ENCODE measurements at regions of chr2 and their contacts with region 1.

Region 1: GRCh38 chr2:178136321-178137025 is 24.2 kb downstream of the RBM45 start:
- DNase-seq: no peak
- H3K4me3 ChIP-seq: no peak overlapping the region
- H3K27ac ChIP-seq: no peak overlapping the region
- H3K4me1 ChIP-seq: no peaks in the 10 kb centered on the region
- H3K27me3 ChIP-seq: peaks cover 4% of the 10 kb centered on the region
- CTCF ChIP-seq: no peak

Region 2: GRCh38 chr2:178177066-178177679 is 40.7 kb after region 1 on chr2:
- intact Hi-C with region 1: no loop called
- DNase-seq: no peak
- H3K4me3 ChIP-seq: no peak overlapping the region
- H3K27ac ChIP-seq: no peak overlapping the region
- H3K4me1 ChIP-seq: no peaks in the 10 kb centered on the region
- H3K27me3 ChIP-seq: no peaks in the 10 kb centered on the region
- CTCF ChIP-seq: no peak

Region 3: GRCh38 chr2:178208817-178209216 is 72.3 kb after region 1 on chr2:
- intact Hi-C with region 1: loop called (anchors 10 kb)
- DNase-seq: no peak
- H3K4me3 ChIP-seq: no peak overlapping the region
- H3K27ac ChIP-seq: no peak overlapping the region
- H3K4me1 ChIP-seq: no peaks in the 10 kb centered on the region
- H3K27me3 ChIP-seq: no peaks in the 10 kb centered on the region
- CTCF ChIP-seq: peak; percentile 16

Region 4: DNA sequence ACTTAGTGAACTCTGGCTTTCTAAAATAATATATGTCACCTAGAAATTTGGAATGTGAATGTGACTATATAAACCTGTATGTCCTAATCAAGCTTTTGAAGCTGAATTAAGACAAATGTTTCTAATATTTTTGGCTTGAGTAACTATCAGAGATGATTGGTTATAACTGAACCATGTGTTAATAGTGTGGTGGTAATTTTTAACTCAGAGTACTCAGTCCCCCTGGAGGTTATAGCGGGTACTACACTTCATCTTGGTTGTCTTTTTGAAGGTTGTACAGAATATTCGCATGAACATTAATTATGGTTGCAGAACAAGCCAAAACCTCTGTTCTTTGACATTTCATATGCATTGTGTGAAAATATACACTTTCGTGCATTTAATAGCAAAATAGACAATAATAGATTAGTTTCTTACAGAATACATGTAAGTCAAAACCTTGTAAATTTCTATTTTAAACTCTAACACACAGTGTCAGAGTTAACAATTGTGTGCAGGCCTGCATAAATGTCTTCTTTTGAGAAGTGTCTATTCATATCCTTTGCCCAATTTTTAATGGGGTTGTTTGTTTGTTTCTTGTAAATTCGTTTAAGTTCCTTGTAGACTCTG is 143.9 kb after region 1 on chr2:
- intact Hi-C with region 1: loop called (anchors 10 kb)
- DNase-seq: peak; percentile 46
- H3K4me3 ChIP-seq: no peak overlapping the region
- H3K27ac ChIP-seq: no peak overlapping the region
- H3K4me1 ChIP-seq: no peaks in the 10 kb centered on the region
- H3K27me3 ChIP-seq: no peaks in the 10 kb centered on the region
- CTCF ChIP-seq: peak; percentile 72